ENCODE measurements at regions of chr15 and their contacts with region 1.

Region 1: GRCh38 chr15:29685155-29686078 is 136.9 kb downstream of the TJP1 start:
- DNase-seq: peak in 1 of 2 donors; percentile 77
- H3K4me3 ChIP-seq: no peak overlapping the region
- CTCF ChIP-seq: no peak
- POLR2A ChIP-seq: no peak

Region 2: DNA sequence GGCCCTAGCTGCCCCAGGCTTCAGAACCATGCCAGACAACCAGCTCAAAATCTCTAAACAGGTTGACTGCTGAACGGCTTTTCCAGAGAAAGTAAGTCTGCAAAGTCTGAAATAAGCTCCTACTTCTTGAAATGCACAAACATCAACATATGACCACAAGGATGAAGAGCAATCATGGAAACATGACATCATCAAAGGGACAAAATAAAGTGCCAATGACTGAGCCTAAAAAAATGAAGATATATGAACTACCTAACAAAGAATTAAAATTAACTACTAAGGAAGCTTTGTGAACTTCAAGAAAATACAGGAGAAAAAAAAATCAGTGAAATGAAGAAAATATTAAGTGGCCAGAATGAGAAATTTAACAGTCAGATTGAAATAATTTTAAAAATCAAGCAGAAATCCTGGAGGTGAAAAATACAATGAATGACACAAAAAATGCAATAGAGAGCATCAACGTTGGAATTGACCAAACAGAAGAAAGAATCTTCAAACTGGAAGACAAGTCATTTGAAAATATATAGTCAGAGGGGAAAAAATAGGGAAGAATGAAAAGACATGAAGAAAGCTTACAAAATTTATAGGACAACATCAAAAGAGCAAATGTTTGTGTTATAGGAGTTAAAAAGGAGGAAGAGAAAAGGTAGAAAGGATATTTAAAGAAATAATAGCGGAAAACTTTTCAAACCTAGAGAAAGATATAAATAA is 1950.5 kb before region 1 on chr15:
- intact Hi-C with region 1: loop called (anchors 5 kb)
- DNase-seq: no peak
- H3K4me3 ChIP-seq: no peak overlapping the region
- CTCF ChIP-seq: no peak
- POLR2A ChIP-seq: no peak

Region 3: GRCh38 chr15:31004220-31004733 is 1318.9 kb after region 1 on chr15:
- intact Hi-C with region 1: no loop called
- DNase-seq: no peak
- H3K4me3 ChIP-seq: no peak overlapping the region
- CTCF ChIP-seq: no peak
- POLR2A ChIP-seq: no peak

Region 4: DNA sequence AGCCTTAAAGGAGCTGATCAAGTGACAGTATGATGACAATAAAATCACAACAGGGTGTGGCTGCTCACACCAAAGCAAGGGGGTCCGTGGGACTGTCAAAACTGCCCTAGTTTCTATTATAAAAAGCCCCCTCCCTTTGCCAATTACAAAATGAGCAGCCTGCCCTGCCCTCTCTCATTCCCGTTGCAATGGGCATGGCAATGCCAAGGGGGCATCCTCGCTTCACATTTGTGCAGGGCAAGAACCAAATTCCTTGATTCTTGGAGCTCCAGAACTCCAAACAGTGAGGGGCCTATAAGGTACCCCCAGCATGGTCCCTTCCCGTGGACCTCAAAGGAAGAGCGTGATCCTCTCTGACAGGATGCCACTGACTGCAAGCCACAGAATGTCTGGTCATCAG is 1521.0 kb after region 1 on chr15:
- intact Hi-C with region 1: no loop called
- DNase-seq: no peak
- H3K4me3 ChIP-seq: no peak overlapping the region
- CTCF ChIP-seq: no peak
- POLR2A ChIP-seq: no peak